ENCODE measurements at regions of chr13 and their contacts with region 1.

Region 1: DNA sequence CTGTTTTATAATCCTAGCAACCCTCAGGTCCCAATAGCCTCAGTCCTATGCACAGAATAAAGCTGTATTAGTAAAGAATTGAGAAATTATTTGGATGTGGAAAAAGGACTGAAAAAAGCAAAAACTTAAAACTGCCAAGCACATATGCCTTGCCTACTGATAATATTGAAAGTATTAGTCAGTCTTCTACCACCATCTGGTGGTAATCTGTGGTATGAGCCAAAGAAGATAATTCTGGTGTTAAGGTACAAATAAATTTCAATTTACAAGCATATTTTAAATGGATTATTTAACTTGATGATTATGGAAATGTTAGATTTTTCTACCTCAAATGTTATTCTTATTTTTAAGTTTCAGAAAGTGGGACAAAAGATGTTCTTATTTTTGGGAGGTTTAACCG is 460.3 kb upstream of the KLHL1 start:
- DNase-seq: no peak
- H3K4me3 Mint-ChIP-seq: no peak overlapping the region
- H3K27ac Mint-ChIP-seq: no peak overlapping the region
- H3K4me1 Mint-ChIP-seq: no peaks in the 10 kb centered on the region
- H3K27me3 Mint-ChIP-seq: no peaks in the 10 kb centered on the region
- CTCF ChIP-seq: no peak

Region 2: DNA sequence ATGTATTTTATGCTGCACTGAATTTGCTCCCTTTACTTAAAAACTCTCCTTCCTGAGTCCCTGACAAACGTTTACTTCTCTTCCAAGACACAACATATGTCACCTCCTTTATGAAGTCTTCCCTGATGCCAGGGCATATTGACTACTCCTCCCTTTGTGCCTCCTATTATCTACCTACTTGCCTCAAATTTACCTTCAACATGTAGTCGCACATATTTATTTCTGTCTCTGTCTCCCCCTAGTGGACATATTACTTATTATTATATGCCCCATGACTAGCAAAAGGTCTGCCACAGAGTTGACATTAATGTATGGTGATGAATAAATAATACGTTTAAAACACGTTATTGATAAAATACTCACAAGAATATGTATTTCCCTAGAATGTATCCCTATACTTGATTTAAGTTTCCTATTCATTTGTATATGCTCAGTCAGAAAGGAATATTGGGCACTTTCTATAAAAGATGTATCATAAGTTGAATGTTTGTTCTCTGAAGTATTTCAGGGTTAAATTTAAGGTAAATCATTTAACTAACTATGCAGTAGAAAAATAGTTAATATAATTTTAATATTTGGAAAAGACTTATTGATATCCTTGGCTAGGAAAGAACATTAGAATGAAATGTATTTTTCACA is 711.3 kb before region 1 on chr13:
- CTCF ChIA-PET with region 1: no interaction called
- intact Hi-C with region 1: loop called (anchors 5 kb)
- DNase-seq: no peak
- H3K4me3 Mint-ChIP-seq: no peak overlapping the region
- H3K27ac Mint-ChIP-seq: peak overlapping the region; percentile 11
- H3K4me1 Mint-ChIP-seq: peaks cover 14% of the 10 kb centered on the region
- H3K27me3 Mint-ChIP-seq: no peaks in the 10 kb centered on the region
- CTCF ChIP-seq: no peak

Region 3: GRCh38 chr13:70098669-70099068 is 469.9 kb before region 1 on chr13:
- CTCF ChIA-PET with region 1: no interaction called
- intact Hi-C with region 1: loop called (anchors 10 kb)
- DNase-seq: no peak
- H3K4me3 Mint-ChIP-seq: no peak overlapping the region
- H3K27ac Mint-ChIP-seq: no peak overlapping the region
- H3K4me1 Mint-ChIP-seq: no peaks in the 10 kb centered on the region
- H3K27me3 Mint-ChIP-seq: no peaks in the 10 kb centered on the region
- CTCF ChIP-seq: no peak

Region 4: DNA sequence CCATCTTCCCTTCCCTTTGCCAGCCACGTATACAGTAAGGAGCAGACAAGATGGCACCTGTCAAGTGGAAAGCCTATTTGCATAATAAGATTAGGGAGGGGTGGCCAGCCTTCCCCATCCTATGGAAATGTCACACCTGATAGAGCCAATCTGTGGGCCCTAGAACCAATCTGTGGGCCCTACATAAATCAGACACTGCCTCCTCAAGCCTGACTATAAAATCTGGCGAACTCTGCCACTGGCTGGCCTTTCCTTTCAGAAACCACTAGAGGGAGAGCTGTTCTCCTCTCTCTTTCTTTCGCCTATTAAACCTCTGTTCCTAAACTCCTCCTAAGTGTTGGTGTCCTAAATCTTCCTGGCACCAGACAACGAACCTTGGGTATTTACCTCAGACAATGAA is 228.8 kb before region 1 on chr13:
- CTCF ChIA-PET with region 1: no interaction called
- intact Hi-C with region 1: loop called (anchors 10 kb)
- DNase-seq: no peak
- H3K4me3 Mint-ChIP-seq: no peak overlapping the region
- H3K27ac Mint-ChIP-seq: no peak overlapping the region
- H3K4me1 Mint-ChIP-seq: no peaks in the 10 kb centered on the region
- H3K27me3 Mint-ChIP-seq: no peaks in the 10 kb centered on the region
- CTCF ChIP-seq: no peak

Region 5: DNA sequence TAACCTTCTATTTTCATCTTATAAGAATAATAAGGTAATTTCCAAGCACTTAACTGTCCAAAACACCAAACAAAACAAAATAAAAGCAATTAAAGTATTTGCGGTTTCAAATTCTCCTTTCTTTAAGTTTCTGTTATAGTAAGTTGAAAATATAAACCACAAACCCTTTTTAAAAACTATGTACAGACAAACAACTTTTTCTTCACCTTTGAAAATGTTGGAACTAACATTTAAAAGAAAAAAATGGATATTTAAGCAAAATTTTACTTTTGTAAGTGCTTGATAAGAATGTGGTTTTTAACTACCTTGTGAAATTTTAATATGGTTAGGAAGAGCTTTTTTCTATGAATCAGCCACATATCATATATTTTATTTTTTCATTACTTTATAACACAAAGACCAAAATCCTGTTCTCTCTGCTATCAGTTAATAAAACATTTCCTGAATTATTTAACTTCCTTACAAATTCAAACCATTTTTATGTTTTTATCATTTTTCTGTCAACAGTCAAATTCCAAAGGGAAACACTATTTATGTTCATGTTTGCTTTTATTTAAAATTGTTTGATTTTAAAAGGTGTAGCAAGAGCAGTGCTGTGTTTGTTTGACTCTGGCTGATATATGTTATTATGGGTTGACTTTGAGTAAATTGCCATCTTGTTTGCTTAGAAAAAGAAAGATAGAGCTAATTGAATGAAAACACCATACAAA is 93.8 kb after region 1 on chr13:
- CTCF ChIA-PET with region 1: no interaction called
- intact Hi-C with region 1: no loop called
- DNase-seq: no peak
- H3K4me3 Mint-ChIP-seq: no peak overlapping the region
- H3K27ac Mint-ChIP-seq: no peak overlapping the region
- H3K4me1 Mint-ChIP-seq: no peaks in the 10 kb centered on the region
- H3K27me3 Mint-ChIP-seq: no peaks in the 10 kb centered on the region
- CTCF ChIP-seq: no peak